ENCODE measurements at regions of chr2 and their contacts with region 1.

Region 1: DNA sequence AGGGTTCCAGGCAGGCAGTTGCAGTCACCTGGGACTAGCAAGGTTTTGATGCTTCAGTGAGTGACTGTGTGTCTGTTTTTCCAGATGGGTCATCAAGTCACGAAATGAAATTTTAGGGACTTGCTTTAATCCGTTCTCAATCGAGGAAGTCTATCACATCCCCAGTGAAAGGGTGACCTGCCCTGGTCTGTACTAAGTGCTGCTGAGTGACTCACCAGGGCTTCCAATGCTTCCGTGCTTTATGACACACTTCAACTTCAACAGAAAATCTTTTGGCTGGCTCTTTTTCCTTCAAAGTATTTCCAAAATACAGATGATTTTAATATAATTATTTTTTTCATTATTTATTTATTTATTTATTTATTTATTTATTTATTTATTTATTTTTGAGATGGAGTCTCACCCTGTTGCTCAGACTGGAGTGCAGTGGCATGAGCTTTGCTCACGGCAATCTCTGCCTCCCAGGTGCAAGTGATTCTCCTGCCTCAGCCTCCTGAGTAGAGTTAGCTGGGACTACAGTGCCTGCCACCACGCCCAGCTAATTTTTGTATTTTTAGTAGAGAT is 18.4 kb downstream of the TFCP2L1 start:
- DNase-seq: no peak
- H3K4me3 ChIP-seq: no peak overlapping the region
- H3K27ac ChIP-seq: no peak overlapping the region
- H3K4me1 ChIP-seq: no peaks in the 10 kb centered on the region
- H3K27me3 ChIP-seq: peaks cover 0 to 10% of the 10 kb centered on the region in 2 donors
- CTCF ChIP-seq: no peak

Region 2: GRCh38 chr2:121088251-121089165 is 178.1 kb before region 1 on chr2:
- intact Hi-C with region 1: no loop called
- DNase-seq: no peak
- H3K4me3 ChIP-seq: no peak overlapping the region
- H3K27ac ChIP-seq: no peak overlapping the region
- H3K4me1 ChIP-seq: peaks cover 0 to 8% (median 4%) of the 10 kb centered on the region in 4 donors
- H3K27me3 ChIP-seq: peaks cover 0 to 42% of the 10 kb centered on the region in 2 donors
- CTCF ChIP-seq: no peak

Region 3: DNA sequence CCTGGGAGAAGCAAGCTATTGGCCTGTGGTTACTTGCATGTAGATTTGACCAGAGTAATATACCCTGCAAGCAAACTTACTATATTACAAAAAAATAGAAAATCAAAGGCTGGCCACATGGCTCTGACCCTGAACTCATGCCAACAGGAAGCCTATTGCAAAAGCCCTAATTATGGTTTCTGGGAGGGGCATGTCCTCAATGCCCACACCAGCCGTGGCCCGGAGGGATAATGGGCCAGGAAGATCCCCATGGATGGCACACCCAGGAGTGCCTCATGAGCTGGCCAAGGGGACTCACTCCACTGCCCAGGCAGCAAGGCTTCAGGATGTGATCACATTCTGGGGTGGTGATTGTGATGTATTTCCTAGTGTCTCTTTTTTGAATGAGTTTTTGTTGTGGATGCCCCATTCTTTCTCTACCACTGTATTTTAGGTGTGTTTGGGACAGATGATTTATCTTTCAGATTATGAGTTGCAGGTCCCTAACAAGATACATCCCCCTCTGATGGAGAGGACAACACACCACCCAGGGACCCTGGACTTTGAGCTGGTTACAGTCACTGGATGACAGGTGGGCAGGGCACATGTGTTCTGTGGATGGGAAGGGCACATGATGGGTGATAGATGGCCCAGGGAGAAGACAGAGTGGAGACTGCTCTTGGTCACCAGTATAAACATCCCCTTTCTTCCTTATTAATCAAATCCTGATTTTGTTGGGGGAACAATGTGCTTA is 37.1 kb after region 1 on chr2:
- intact Hi-C with region 1: loop called (anchors 2 kb)
- DNase-seq: no peak
- H3K4me3 ChIP-seq: no peak overlapping the region
- H3K27ac ChIP-seq: no peak overlapping the region
- H3K4me1 ChIP-seq: no peaks in the 10 kb centered on the region
- H3K27me3 ChIP-seq: peaks cover 0 to 15% of the 10 kb centered on the region in 2 donors
- CTCF ChIP-seq: no peak

Measured in tibial artery (tissue), 4 donors.